Left colon (tissue), 2 donors: ENCODE measurements at regions of chr19 and their contacts with region 1.

Region 1: DNA sequence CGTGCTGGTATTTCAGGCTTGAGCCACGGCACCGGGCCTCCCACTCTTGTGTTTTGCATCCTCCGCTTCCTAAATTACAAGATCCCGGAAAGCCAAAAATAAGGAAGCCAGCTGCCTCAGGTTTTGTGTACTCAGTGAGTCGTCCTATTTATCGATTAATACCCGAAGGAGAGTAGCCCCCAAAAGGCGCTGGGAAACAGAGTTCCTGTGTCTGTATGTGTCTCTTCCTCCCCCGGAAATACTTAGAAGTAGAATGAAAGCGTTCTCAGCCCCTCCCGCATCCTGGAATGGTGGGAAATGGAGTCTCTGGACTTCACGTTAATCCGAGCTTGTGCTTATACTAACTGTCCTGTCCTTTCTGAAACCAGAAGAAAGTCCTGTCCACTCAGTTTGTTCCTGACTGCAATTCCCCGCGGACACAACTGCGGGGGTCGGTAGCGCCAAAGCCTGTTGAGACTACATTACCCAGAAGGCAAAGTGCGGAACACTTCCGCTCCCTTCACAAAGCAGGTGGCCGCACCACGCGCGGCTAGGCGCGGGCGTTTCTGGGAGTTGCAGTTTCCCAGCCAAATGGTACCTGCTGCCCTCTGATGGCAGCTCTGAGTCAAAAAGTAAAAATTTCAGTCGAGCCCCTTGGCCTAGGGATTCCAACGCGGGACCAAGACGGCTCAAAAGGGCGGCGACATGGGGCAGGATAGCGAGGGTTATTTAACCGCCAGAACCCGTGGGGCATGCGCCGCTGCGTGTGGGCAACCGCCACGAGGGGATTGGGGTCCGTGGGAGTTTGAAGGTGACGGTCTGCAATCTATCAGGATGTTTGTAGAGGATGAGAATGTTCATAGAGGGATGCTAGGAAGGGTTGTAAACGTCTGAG is 2.2 kb upstream of the GSK3A start:
- DNase-seq: peak; percentile 93 to 94
- ATAC-seq: peak; percentile 49

Region 2: DNA sequence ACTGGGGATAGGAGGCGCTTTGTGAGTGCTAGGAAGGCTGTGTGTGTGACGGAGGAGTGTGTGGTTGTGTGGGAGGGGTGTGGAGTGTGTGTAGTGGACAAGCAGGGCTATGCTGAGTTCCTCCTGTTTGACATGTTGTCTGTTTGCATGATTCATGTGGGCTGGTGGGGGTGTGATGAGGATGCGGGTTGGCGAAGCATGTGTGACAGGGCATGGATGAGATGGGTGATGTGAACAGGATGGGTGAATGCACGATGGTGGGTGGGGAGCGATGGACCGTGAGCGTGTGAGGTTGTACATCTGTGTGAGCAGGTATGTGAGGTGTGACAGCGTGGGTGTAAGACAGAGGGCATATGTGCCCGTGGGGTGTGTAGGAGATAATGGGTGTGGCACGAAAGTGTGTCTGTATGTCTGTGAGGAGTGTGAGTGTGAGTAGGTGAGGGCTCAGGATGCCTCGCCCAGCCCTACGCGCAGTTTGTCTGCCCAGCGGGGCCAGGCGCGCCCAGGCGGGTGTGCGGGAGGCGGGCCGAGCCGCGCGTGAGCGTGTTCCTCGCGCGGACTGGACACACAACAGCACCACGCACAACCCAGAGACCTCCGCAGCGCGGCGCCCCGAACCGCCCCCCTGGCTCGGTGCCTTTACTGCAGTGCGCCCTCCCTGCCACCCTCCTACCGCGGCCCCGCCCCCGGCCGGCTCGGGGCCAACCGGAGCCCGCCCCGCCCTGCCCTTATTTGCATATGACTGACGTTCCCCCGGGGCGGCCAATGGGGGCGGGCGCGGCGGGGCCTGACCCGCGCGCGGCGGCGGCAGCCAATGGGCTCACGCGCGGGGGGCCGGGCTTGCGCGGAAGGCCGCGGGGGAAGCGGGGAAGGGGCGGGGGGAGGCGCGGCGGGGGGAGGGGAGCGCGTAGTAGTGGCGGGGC is 38.8 kb after region 1 on chr19:
- intact Hi-C with region 1: loop called in 1 of 2 experiments (anchors 5 kb)
- DNase-seq: peak; percentile 94 to 96
- ATAC-seq: peak; percentile 78